Panc1 (cell line): ENCODE measurements at regions of chr3 and their contacts with region 1.

Region 1: GRCh38 chr3:94513600-94513999 is 450.7 kb downstream of the NSUN3 start:
- DNase-seq: no peak
- ATAC-seq: no peak
- H3K4me3 ChIP-seq: no peak overlapping the region
- H3K27ac ChIP-seq: no peak overlapping the region
- H3K4me1 ChIP-seq: no peaks in the 10 kb centered on the region
- H3K27me3 ChIP-seq: no peaks in the 10 kb centered on the region
- CTCF ChIP-seq: no peak

Region 2: DNA sequence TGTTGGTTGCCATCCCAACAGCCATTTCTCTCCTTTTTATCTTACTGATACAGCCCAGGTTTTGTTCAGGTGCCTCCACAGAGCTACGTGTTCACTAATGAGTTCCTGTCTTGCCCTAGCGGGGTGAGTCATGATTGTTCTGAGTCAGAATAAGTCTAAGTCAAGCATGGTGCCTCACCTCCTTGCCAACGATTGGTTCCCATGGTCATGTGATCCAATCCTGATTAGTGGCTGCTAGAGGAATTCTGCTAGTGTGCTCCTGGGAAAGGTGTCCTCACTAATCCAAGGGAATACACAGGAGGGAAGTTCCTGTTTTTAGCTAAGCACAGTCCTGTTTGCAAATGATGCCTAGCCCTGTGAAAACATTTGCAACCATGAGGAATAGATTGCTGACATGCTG is 350.9 kb before region 1 on chr3:
- CTCF ChIA-PET with region 1: no interaction called
- POLR2A ChIA-PET with region 1: no interaction called
- in situ Hi-C with region 1: no loop called
- intact Hi-C with region 1: no loop called
- DNase-seq: no peak
- ATAC-seq: no peak; the same call in 1 of the 2 replicates
- H3K4me3 ChIP-seq: no peak overlapping the region
- H3K27ac ChIP-seq: no peak overlapping the region
- H3K4me1 ChIP-seq: no peaks in the 10 kb centered on the region
- H3K27me3 ChIP-seq: peaks cover 3% of the 10 kb centered on the region; the same call in 1 of the 2 replicates
- CTCF ChIP-seq: no peak

Region 3: DNA sequence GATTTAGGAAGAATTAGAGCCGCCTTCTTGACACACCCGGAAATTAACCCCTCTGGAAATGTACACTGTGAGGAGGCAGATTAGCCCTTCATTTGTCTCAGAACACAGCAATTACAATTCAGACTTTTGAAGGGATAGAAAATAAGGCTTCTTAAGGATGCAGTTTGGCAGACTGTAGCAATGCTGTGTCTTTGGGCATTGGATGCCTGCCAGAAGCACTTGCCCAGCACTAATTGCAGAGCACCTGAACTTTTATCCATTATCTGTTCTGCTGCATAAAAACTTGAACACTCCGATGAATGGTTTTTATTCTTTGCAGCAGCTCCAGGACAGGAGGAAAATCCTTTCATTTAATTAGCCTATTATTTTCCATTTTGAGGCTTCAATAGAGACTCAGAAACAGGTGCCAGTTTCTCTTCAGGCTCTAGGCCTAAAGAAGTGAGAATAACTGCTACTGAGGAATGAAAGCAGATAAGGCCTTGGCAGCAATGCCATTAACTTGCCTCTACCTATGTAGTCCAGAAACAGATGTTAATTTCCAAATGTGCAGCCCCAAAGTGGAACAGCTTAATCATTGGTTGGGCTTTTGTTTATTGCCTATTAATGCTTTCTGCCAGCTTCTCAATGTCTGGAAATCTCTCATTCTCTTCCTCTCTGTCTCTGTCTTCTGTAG is 32.2 kb before region 1 on chr3:
- CTCF ChIA-PET with region 1: no interaction called
- POLR2A ChIA-PET with region 1: no interaction called
- in situ Hi-C with region 1: no loop called
- intact Hi-C with region 1: no loop called
- DNase-seq: no peak
- ATAC-seq: no peak
- H3K4me3 ChIP-seq: no peak overlapping the region
- H3K27ac ChIP-seq: no peak overlapping the region
- H3K4me1 ChIP-seq: no peaks in the 10 kb centered on the region
- H3K27me3 ChIP-seq: no peaks in the 10 kb centered on the region
- CTCF ChIP-seq: no peak

Region 4: GRCh38 chr3:94573337-94573736 is 59.7 kb after region 1 on chr3:
- CTCF ChIA-PET with region 1: no interaction called
- POLR2A ChIA-PET with region 1: no interaction called
- in situ Hi-C with region 1: no loop called
- intact Hi-C with region 1: loop called (anchors 10 kb)
- DNase-seq: no peak
- ATAC-seq: no peak
- H3K4me3 ChIP-seq: no peak overlapping the region
- H3K27ac ChIP-seq: no peak overlapping the region
- H3K4me1 ChIP-seq: no peaks in the 10 kb centered on the region
- H3K27me3 ChIP-seq: no peaks in the 10 kb centered on the region
- CTCF ChIP-seq: no peak